ENCODE measurements at regions of chr1 and their contacts with region 1.

Region 1: DNA sequence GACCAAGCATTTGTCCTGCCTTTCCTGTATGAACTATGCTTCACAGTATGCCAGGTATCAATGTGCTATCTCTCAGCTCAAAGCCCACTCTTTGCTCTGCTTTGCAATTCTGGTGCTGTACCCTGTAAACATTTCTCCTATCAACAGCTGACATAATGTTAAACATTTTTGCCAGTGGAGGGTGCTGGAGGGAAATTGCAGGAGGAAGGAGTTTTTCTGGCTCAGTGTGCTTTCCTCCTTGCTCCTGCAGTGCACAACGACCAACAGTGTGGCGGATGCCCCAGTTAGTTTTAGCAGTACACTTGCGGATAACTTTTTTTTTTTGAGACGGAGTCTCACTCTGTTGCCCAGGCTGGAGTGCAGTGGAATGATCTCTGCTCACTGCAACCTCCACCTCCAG is 67.1 kb upstream of the PTGFRN start:
- DNase-seq: no peak

Region 2: GRCh38 chr1:116664366-116664977 is 178.2 kb before region 1 on chr1:
- in situ Hi-C with region 1: no loop called
- DNase-seq: no peak

Region 3: DNA sequence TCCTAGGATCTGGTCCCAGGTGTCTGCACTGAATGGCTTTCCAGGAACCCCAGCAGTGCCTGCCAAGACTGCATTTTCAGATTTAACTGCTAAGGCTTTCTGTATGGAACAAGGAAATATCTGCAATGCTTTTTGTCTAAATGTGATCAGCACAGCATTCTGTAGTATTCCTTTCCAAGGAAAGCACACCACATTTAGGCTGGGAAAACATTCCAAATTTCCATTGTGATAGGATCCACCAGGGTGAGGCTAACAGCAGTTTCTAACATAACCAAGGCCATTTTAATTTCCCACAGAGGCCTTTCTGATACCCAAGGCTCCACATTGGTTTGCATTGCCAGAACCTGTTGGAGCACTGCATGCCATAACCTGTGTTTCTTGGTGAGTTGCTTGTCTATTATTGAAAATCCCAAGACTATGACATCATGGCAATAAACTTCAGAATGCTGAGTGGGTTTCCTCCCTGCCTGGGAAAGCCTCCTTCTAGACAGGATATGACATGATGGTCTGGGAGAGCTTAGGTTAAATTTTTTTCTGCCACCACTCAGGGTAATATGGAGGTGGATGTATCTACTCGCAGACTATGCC is 43.7 kb after region 1 on chr1:
- in situ Hi-C with region 1: loop called (anchors 5 kb)
- DNase-seq: no peak

Measured in G401 (cell line).